ENCODE measurements at regions of chr22 and their contacts with region 1.

Region 1: DNA sequence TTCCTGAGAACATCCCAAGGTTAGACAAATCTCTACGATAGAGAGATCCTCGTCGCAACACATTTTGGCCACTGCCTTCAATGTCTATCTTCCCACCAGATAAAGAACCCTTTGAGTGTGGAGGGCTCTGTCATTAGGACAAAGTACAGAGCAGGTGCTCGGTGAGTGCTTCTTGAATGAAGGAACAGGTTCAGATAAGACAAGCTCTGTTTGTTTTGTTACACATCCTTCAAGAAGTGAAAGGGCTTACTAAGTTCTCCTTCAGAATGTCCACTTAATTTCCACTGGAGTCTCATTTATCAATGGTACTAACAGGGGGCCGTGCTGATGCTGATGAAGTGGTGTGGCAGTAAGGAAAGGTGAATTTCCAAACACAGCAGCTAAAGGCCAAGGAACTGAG is 89.4 kb downstream of the SYN3 start:
- DNase-seq: no peak
- CTCF ChIP-seq: no peak

Region 2: DNA sequence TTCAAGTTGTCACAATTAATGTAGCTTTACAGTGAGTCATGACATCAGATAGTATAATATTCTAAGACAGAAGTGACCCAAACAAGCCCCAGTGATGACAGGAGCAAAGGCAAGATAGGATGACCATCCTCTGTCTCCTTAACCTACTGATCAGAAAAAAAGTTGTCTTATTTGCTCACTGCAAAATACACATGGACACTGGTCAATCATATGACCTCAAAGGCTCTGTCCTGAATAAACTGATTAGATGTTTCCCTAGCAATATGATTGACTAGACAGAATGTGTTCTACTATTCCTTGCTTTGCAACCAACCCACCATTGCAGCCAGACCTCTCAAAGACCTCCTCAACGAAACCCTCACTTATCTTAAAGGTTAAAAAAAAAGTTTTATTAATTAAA is 28.0 kb before region 1 on chr22:
- CTCF ChIA-PET with region 1: no interaction called
- POLR2A ChIA-PET with region 1: no interaction called
- DNase-seq: no peak
- CTCF ChIP-seq: no peak

Region 3: DNA sequence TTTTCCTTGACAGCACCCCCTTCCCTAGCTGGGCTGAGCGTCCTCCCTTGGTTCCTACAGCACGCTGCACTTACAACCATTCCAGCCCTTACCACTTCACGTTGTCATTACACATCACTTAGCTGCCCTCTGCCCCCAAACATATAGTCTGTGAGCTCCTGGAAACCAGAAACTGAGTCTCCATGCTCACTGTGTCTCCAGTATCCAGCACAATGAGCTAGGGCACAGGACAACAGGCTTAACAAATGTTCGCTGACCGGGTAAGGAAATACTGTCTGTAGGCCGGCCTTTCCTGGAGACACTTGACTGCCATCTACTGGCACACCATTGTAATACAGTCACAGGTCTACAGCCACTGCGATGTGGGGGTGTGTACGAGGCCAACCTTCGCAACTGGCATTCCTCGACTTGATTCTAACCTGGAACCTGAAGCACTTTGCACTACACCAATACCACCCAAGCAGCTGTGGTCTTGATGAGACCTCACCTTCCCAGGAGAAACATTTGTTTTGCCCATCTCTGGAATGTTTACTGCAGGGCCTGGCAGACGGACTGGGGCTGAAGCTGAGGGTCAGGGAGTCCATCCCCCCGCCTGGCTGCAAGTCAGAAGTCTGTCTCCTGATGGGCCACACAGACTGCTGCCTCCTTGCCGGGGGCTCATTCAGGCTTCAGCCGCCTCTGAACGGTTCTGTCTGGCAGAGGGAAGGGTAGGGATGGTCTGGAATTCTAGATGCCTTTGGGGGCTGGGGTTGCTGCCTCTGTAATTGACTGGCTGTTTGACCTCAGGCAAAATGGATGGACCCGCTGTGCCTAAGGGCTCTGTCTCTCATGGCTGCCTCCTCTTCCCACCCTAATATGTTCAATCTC is 17.4 kb after region 1 on chr22:
- CTCF ChIA-PET with region 1: interaction called, 12 read pairs
- POLR2A ChIA-PET with region 1: no interaction called
- DNase-seq: peak; percentile 65
- CTCF ChIP-seq: peak; percentile 66

Region 4: DNA sequence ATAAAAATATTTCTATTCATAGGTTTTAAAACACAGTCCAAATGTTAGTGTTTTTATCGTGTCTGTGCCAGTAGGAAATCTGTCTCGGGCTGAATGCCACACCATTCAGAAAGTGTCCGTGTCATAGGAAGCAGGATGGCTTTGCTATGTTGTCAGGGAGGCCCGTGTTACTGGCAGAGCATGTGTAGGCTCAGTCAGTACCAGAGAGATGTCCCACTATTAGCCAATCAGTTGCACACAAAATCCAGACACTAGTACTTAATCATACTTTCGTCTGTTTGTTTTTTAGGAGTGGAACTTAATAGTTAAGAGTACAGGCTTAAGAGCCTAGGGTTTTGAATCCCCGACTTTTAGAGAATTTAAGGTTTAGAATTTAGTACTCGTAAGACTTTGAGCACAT is 119.7 kb after region 1 on chr22:
- CTCF ChIA-PET with region 1: no interaction called
- POLR2A ChIA-PET with region 1: no interaction called
- DNase-seq: no peak
- CTCF ChIP-seq: no peak